Activated T-helper 1 cell treated with anti-CD3 and anti-CD28 coated beads, Interleukin-12 subunit alpha, Interleukin-12 subunit beta, Interleukin-2, Interleukin-4 antibody, amounts not matched to agents 30 ng/mL and 10 ng/mL and 1 ng/mL, durations not matched to agents 14 hours and 24 hours and 36 hours (primary cell): ENCODE measurements at regions of chr11 and their contacts with region 1.

Region 1: GRCh38 chr11:62652161-62653006 is 718 bp downstream of the INTS5 start:
- DNase-seq: no peak
- H3K4me3 Mint-ChIP-seq: peak overlapping the region; percentile 99
- H3K27ac Mint-ChIP-seq: peak overlapping the region; percentile 95
- H3K4me1 Mint-ChIP-seq: peaks cover 25% of the 10 kb centered on the region
- H3K27me3 Mint-ChIP-seq: no peaks in the 10 kb centered on the region

Region 2: GRCh38 chr11:62542750-62543567 is 109.4 kb before region 1 on chr11:
- intact Hi-C with region 1: no loop called
- DNase-seq: peak; percentile 69
- H3K4me3 Mint-ChIP-seq: peak overlapping the region; percentile 97
- H3K27ac Mint-ChIP-seq: peak overlapping the region; percentile 95
- H3K4me1 Mint-ChIP-seq: peaks cover 75% of the 10 kb centered on the region
- H3K27me3 Mint-ChIP-seq: peaks cover 3% of the 10 kb centered on the region

Region 3: DNA sequence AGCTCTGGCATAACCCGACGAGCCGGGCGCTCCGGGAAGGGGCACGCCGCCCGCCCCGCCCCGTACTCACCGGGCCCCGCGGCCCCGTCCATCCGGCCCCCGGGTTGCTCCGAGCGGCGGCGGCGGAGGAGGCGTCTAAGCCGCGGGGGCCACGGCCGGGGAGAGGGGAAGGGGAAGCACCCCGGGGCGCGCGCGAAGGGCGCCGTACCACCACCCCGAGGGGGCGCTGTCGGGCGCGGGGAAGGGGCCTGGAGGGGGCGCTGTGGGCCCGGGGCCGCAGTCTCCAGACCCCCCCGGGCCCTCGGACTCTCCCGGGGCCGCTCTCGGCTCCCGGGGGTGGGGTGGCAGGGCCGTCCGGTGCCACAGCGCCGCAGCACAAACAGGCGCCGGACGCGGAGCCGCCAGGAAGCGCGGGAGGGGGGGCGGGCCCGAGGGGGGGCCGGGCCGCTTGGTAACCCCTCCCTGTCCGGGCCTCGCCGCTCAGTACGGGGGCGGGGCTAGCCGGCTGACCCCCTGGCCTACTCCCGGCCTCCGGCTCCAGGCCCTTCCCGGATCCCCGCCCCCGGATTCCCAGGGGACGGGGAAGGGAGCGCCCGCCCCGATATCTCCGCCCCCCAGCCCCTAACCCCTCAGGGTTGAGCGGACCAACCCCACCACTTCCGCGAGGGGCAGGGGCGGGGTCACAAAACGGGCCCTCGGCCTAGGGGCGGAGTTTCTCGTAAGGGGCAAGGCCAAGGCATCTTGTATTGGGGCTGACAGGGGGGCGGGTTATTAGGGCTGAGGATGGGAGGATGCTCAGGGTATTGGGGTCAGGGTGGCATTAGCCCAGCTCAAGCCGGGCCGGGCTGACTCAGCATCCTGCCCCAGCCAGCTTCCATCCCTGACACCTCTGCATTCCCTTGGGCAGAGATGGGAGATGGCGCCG is 39.8 kb before region 1 on chr11 and contains the starts of genes EML3 and ROM1:
- intact Hi-C with region 1: loop called (anchors 1 kb)
- DNase-seq: peak; percentile 85
- H3K4me3 Mint-ChIP-seq: peak within 1 kb of the TSS; percentile 96
- H3K27ac Mint-ChIP-seq: peak within 1 kb of the TSS; percentile 97
- H3K4me1 Mint-ChIP-seq: peaks cover 32% of the 10 kb centered on the region
- H3K27me3 Mint-ChIP-seq: no peaks in the 10 kb centered on the region
- total RNA-seq, gene EML3: 164 and 167 TPM in 2 replicates
- total RNA-seq, gene ROM1: 2.5 and 3.2 TPM in 2 replicates

Region 4: DNA sequence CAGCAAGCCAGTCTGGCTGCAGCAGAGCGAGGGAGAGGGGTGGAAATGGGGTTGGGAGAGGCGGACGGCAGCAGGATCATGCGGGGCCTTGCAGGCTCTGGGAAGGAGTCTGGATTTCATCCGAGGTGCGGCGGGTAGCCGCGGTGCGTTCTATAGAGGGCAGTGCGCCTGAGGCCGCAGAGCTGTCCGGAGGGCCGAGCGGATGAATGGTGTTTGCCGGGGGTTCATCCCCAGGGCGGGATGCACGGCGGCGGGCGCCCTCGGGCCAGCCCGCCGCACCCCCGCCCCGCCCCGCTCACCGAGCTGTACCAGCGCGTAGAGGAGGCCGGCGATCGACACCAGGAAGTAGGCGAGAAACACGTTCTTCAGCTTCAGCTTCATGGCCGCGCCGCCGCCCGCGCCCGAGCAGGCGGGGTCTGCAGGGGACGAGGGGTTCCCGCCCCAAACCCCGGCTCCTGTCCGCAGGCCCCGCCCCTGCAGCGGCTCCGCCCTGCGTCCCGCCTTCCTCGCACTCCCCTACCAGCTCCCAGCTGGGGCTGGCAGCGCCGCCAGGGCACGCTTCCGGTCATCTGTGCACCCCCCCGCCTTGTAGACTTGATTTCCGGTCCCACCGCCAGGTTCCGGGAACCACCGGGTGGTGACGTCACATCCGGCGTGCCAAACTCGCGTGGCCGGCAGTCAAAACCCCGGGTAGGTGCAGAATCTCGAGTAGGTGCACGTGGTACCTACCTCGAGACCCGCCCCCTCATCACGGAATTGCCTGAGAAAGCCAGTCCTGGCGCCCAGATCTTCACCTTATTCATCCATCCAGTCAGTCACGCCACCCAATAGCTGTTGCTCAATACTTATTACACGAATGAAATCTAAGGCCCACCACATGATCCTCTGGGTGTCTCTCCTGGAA is 30.6 kb before region 1 on chr11 and contains the start of gene B3GAT3:
- intact Hi-C with region 1: loop called (anchors 1 kb)
- DNase-seq: peak; percentile 96
- H3K4me3 Mint-ChIP-seq: peak within 1 kb of the TSS; percentile 95
- H3K27ac Mint-ChIP-seq: peak within 1 kb of the TSS; percentile 96
- H3K4me1 Mint-ChIP-seq: peaks cover 25% of the 10 kb centered on the region
- H3K27me3 Mint-ChIP-seq: no peaks in the 10 kb centered on the region
- total RNA-seq, gene B3GAT3: 93.8 and 94.3 TPM in 2 replicates

Region 5: GRCh38 chr11:62665075-62665598 is 12.8 kb after region 1 on chr11 and contains the starts of genes C11orf98 and CSKMT:
- intact Hi-C with region 1: loop called (anchors 1 kb)
- DNase-seq: peak; percentile 97
- H3K4me3 Mint-ChIP-seq: peak within 1 kb of the TSS; percentile 98
- H3K27ac Mint-ChIP-seq: peak within 1 kb of the TSS; percentile 81
- H3K4me1 Mint-ChIP-seq: peaks cover 33% of the 10 kb centered on the region
- H3K27me3 Mint-ChIP-seq: no peaks in the 10 kb centered on the region
- total RNA-seq, gene C11orf98: 146 and 151 TPM in 2 replicates
- total RNA-seq, gene CSKMT: 65.0 and 69.4 TPM in 2 replicates

Region 6: GRCh38 chr11:62671575-62672389 is 19.4 kb after region 1 on chr11 and contains the starts of genes LBHD1 and UQCC3:
- intact Hi-C with region 1: loop called (anchors 1 kb)
- DNase-seq: peak; percentile 75
- H3K4me3 Mint-ChIP-seq: peak within 1 kb of the TSS; percentile 97
- H3K27ac Mint-ChIP-seq: peak within 1 kb of the TSS; percentile 98
- H3K4me1 Mint-ChIP-seq: peaks cover 34% of the 10 kb centered on the region
- H3K27me3 Mint-ChIP-seq: no peaks in the 10 kb centered on the region
- total RNA-seq, gene LBHD1: 23.4 and 24.3 TPM in 2 replicates
- total RNA-seq, gene UQCC3: 8.9 and 11.4 TPM in 2 replicates

Region 7: DNA sequence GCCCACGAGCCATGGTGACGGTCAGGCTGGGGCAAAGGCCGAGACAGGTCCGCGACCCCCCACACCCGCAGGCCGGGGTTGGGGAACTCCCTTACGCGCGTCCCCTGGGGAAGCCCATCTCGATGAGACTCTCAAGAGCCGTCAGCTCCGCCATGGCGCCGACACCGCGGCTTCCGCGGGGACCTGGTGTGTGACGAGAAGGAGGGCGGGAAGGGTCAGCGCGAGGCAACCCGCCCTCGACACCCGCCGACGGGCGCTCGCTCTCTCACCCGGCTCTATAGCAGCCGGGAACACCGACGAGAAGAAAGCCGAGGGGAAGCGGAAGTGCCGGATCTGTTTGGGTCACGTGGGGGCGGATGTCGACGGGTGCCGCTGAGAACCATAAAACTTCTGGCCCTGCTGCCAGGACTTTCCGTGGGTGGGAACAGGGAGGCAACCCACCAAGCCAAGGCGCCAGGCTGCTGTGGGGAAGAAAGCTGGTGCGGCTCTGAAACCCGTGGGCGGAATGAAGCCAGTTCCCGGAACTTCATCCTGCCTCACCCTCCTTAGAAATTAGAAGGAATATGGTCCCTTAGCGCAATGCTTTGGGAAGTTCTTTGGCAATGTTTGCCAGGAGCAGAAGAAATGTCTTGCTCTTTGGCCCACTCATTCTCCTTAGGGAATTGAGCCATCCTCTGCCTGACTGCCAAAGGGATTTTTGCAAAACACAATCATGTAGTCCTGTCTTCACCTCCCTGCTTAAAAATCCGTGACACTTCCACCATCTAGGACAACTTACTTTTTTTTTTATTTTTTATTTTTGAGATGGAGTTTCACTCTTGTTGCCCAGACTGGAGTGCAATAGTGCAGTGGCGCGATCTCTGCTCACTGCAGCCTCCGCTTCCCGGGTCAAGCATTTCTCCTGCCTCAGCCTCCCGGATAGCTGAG is 26.6 kb after region 1 on chr11 and contains the start of gene UBXN1:
- intact Hi-C with region 1: loop called (anchors 1 kb)
- DNase-seq: peak; percentile 79
- H3K4me3 Mint-ChIP-seq: peak within 1 kb of the TSS; percentile 80
- H3K27ac Mint-ChIP-seq: peak within 1 kb of the TSS; percentile 82
- H3K4me1 Mint-ChIP-seq: peaks cover 36% of the 10 kb centered on the region
- H3K27me3 Mint-ChIP-seq: no peaks in the 10 kb centered on the region
- total RNA-seq, gene UBXN1: 125 and 128 TPM in 2 replicates

Region 8: GRCh38 chr11:62705880-62706849 is 53.8 kb after region 1 on chr11:
- intact Hi-C with region 1: no loop called
- DNase-seq: peak; percentile 89
- H3K4me3 Mint-ChIP-seq: peak overlapping the region; percentile 89
- H3K27ac Mint-ChIP-seq: peak overlapping the region; percentile 79
- H3K4me1 Mint-ChIP-seq: peaks cover 49% of the 10 kb centered on the region
- H3K27me3 Mint-ChIP-seq: no peaks in the 10 kb centered on the region